ENCODE measurements at regions of chr7 and their contacts with region 1.

Region 1: DNA sequence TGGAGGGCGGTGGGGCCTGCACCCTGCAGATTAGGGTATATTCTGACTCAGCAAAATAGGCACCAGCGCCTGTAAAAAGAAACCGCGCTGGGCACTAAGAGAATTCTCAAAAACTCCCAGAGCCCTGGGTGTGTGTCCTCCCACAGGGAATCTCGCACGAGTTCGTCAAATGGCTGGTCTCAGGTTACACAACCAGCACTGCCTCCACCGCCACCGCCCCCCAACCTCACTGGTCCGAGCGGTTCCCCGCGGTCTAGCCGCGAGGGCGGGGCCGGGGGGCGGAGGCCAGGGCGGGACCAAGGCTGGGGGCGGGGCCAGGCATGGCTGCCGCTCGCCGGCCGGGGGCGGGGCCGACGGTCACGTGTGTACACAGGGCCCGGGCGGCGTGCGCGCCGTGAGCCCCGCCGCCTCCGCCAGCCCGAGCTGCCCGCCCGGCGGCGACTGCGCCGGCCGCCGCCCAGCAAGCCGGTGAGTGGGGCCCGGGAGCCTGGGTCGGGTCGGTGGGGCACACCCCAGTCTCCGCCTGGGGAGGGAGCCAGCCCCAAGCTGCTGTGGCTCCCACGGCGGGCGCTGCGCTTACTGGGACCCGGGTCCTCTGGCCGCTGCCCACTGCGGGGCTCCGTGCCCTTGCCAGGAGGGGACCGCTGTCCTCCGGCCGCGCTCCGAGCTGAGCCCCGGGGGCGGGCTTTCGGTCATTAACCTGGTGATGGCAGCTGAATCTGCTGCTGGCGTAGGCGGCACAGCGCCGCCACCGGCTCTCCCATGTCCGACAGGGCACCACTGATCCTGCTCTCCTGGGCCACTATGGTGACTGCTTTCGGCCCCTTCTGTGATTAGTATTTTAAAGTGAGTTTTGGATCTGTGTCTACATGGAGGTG is at the start of gene GPR146:
- DNase-seq: peak; percentile 100
- CTCF ChIP-seq: peak; percentile 61

Region 2: DNA sequence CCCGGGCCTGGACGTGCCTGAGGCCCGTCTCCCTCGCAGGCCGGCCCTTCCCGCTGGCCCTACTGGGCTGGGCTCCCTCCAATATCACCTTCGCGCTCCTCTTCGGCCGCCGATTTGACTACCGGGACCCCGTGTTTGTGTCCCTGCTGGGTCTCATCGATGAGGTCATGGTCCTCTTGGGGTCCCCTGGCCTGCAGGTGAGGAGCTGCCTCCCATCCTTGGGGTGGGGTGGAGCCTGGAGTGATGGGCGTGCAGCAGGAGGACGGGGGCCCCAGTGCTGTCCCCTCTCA is 59.4 kb before region 1 on chr7:
- CTCF ChIA-PET with region 1: no interaction called
- POLR2A ChIA-PET with region 1: no interaction called
- DNase-seq: no peak
- CTCF ChIP-seq: no peak

Region 3: GRCh38 chr7:1028775-1029636 is 15.4 kb before region 1 on chr7:
- CTCF ChIA-PET with region 1: interaction called, 12 read pairs
- POLR2A ChIA-PET with region 1: no interaction called
- DNase-seq: peak; percentile 83
- CTCF ChIP-seq: no peak

Region 4: GRCh38 chr7:1059200-1060091 is 15.0 kb after region 1 on chr7:
- CTCF ChIA-PET with region 1: interaction called, 40 read pairs
- POLR2A ChIA-PET with region 1: no interaction called
- DNase-seq: peak; percentile 61
- CTCF ChIP-seq: no peak

Measured in GM10248 (cell line).